ENCODE measurements at regions of chr2 and their contacts with region 1.

Region 1: DNA sequence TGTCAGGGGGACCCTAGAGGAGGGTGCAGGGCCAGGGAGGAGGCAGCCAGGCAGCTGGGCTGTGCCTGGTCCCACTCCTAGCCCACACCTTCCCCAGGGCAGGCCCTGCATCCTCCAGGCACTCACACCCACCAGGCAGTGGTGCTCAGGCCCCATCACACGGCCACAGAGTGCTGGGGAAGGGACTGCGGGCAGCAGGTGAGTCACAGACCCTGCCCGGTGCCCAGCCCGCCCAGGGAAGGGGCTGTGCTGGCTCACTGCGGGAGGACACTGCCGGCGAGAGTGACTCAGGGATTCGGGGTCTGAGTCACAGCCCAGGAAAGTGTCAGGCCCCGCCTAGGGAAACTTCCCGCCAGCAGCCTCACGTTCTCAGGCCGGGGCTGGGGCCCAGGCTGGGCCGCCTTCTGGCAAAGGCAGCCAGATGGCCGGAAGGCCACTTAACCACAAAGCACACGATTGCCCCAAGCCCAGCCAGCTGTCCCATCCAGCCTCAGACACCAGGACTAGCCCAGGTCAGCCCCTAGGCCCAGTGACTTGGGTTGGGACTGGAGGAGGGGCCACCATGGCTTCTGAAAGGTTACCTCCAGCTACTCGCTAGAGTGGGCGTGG is 42.2 kb downstream of the BIN1 start:
- DNase-seq: peak; percentile 87
- ATAC-seq: peak; percentile 94
- H3K4me3 ChIP-seq: no peak overlapping the region; a peak in 1 of 4 replicates
- H3K27ac ChIP-seq: peak overlapping the region; percentile 88
- H3K4me1 ChIP-seq: peaks cover 25% of the 10 kb centered on the region
- H3K27me3 ChIP-seq: no peaks in the 10 kb centered on the region
- CTCF ChIP-seq: no peak

Region 2: GRCh38 chr2:125925891-125926546 is 1138.7 kb before region 1 on chr2:
- CTCF ChIA-PET with region 1: no interaction called
- POLR2A ChIA-PET with region 1: no interaction called
- in situ Hi-C with region 1: no loop called
- intact Hi-C with region 1: no loop called
- DNase-seq: no peak
- ATAC-seq: no peak
- H3K4me3 ChIP-seq: no peak overlapping the region
- H3K27ac ChIP-seq: no peak overlapping the region
- H3K4me1 ChIP-seq: no peaks in the 10 kb centered on the region
- H3K27me3 ChIP-seq: no peaks in the 10 kb centered on the region
- CTCF ChIP-seq: no peak

Region 3: GRCh38 chr2:126496493-126496892 is 568.3 kb before region 1 on chr2:
- CTCF ChIA-PET with region 1: no interaction called
- POLR2A ChIA-PET with region 1: no interaction called
- in situ Hi-C with region 1: no loop called
- intact Hi-C with region 1: no loop called
- DNase-seq: no peak
- ATAC-seq: no peak
- H3K4me3 ChIP-seq: no peak overlapping the region
- H3K27ac ChIP-seq: no peak overlapping the region
- H3K4me1 ChIP-seq: no peaks in the 10 kb centered on the region
- H3K27me3 ChIP-seq: no peaks in the 10 kb centered on the region
- CTCF ChIP-seq: no peak

Region 4: GRCh38 chr2:127157651-127158470 is 93.1 kb after region 1 on chr2:
- CTCF ChIA-PET with region 1: interaction called, 12 read pairs
- POLR2A ChIA-PET with region 1: no interaction called
- in situ Hi-C with region 1: no loop called
- intact Hi-C with region 1: no loop called
- DNase-seq: no peak
- ATAC-seq: no peak
- H3K4me3 ChIP-seq: no peak overlapping the region
- H3K27ac ChIP-seq: no peak overlapping the region
- H3K4me1 ChIP-seq: no peaks in the 10 kb centered on the region
- H3K27me3 ChIP-seq: no peaks in the 10 kb centered on the region; the same call in 1 of the 2 replicates
- CTCF ChIP-seq: no peak

Measured in Panc1 (cell line).